CD8-positive, alpha-beta T cell (primary cell): ENCODE measurements at regions of chr11 and their contacts with region 1.

Region 1: GRCh38 chr11:65988791-65989592 is 13.0 kb downstream of the EIF1AD start:
- DNase-seq: peak; percentile 84 to 96 (median 91)
- ATAC-seq: peak; percentile 98
- H3K4me3 ChIP-seq: no peak overlapping the region
- H3K4me3 Mint-ChIP-seq: no peak overlapping the region
- H3K27ac ChIP-seq: peak overlapping the region in 1 of 2 experiments; percentile 20
- H3K27ac Mint-ChIP-seq: peak overlapping the region; percentile 6
- H3K4me1 ChIP-seq: no peaks in the 10 kb centered on the region
- H3K4me1 Mint-ChIP-seq: peaks cover 5% of the 10 kb centered on the region
- H3K27me3 ChIP-seq: no peaks in the 10 kb centered on the region
- H3K27me3 Mint-ChIP-seq: no peaks in the 10 kb centered on the region
- CTCF ChIP-seq: peak; percentile 98

Region 2: GRCh38 chr11:65625628-65626342 is 363.2 kb before region 1 on chr11:
- CTCF ChIA-PET with region 1: interaction called, 3 read pairs
- POLR2A ChIA-PET with region 1: no interaction called
- intact Hi-C with region 1: loop called in 1 of 2 experiments (anchors 5 kb)
- DNase-seq: peak in 8 of 9 experiments; percentile 24 to 83 (median 63)
- ATAC-seq: peak; percentile 88
- H3K4me3 ChIP-seq: no peak overlapping the region
- H3K4me3 Mint-ChIP-seq: no peak overlapping the region
- H3K27ac ChIP-seq: no peak overlapping the region
- H3K27ac Mint-ChIP-seq: peak overlapping the region; percentile 55
- H3K4me1 ChIP-seq: peaks cover 5% of the 10 kb centered on the region
- H3K4me1 Mint-ChIP-seq: peaks cover 9% of the 10 kb centered on the region
- H3K27me3 ChIP-seq: no peaks in the 10 kb centered on the region
- H3K27me3 Mint-ChIP-seq: no peaks in the 10 kb centered on the region
- CTCF ChIP-seq: peak; percentile 66

Region 3: GRCh38 chr11:65779851-65780577 is 209.0 kb before region 1 on chr11:
- CTCF ChIA-PET with region 1: interaction called, 21 read pairs
- POLR2A ChIA-PET with region 1: no interaction called
- intact Hi-C with region 1: loop called (anchors 1 kb)
- DNase-seq: peak; percentile 46 to 88 (median 76)
- ATAC-seq: peak; percentile 74
- H3K4me3 ChIP-seq: peak overlapping the region; percentile 85
- H3K4me3 Mint-ChIP-seq: peak overlapping the region; percentile 86
- H3K27ac ChIP-seq: peak overlapping the region; percentile 31 to 52
- H3K27ac Mint-ChIP-seq: peak overlapping the region; percentile 77
- H3K4me1 ChIP-seq: peaks cover 17% of the 10 kb centered on the region
- H3K4me1 Mint-ChIP-seq: peaks cover 8% of the 10 kb centered on the region
- H3K27me3 ChIP-seq: no peaks in the 10 kb centered on the region
- H3K27me3 Mint-ChIP-seq: peaks cover under 1% of the 10 kb centered on the region
- CTCF ChIP-seq: peak; percentile 97

Region 4: GRCh38 chr11:65802841-65803240 is 186.2 kb before region 1 on chr11:
- CTCF ChIA-PET with region 1: no interaction called
- POLR2A ChIA-PET with region 1: no interaction called
- intact Hi-C with region 1: no loop called
- DNase-seq: no peak
- ATAC-seq: no peak
- H3K4me3 ChIP-seq: no peak overlapping the region
- H3K4me3 Mint-ChIP-seq: no peak overlapping the region
- H3K27ac ChIP-seq: no peak overlapping the region
- H3K27ac Mint-ChIP-seq: no peak overlapping the region
- H3K4me1 ChIP-seq: no peaks in the 10 kb centered on the region
- H3K4me1 Mint-ChIP-seq: no peaks in the 10 kb centered on the region
- H3K27me3 ChIP-seq: peaks cover 2 to 4% of the 10 kb centered on the region in 2 experiments
- H3K27me3 Mint-ChIP-seq: peaks cover 25% of the 10 kb centered on the region
- CTCF ChIP-seq: no peak

Region 5: GRCh38 chr11:65817835-65818742 is 170.9 kb before region 1 on chr11:
- CTCF ChIA-PET with region 1: interaction called, 4 read pairs
- POLR2A ChIA-PET with region 1: no interaction called
- intact Hi-C with region 1: loop called (anchors 1 kb)
- DNase-seq: peak; percentile 89 to 99 (median 94)
- ATAC-seq: peak; percentile 93
- H3K4me3 ChIP-seq: peak overlapping the region; percentile 47 to 74
- H3K4me3 Mint-ChIP-seq: peak overlapping the region; percentile 80
- H3K27ac ChIP-seq: peak overlapping the region; percentile 62 to 65
- H3K27ac Mint-ChIP-seq: peak overlapping the region; percentile 67
- H3K4me1 ChIP-seq: peaks cover 12% of the 10 kb centered on the region
- H3K4me1 Mint-ChIP-seq: peaks cover 14% of the 10 kb centered on the region
- H3K27me3 ChIP-seq: no peaks in the 10 kb centered on the region
- H3K27me3 Mint-ChIP-seq: no peaks in the 10 kb centered on the region
- CTCF ChIP-seq: peak; percentile 100

Region 6: DNA sequence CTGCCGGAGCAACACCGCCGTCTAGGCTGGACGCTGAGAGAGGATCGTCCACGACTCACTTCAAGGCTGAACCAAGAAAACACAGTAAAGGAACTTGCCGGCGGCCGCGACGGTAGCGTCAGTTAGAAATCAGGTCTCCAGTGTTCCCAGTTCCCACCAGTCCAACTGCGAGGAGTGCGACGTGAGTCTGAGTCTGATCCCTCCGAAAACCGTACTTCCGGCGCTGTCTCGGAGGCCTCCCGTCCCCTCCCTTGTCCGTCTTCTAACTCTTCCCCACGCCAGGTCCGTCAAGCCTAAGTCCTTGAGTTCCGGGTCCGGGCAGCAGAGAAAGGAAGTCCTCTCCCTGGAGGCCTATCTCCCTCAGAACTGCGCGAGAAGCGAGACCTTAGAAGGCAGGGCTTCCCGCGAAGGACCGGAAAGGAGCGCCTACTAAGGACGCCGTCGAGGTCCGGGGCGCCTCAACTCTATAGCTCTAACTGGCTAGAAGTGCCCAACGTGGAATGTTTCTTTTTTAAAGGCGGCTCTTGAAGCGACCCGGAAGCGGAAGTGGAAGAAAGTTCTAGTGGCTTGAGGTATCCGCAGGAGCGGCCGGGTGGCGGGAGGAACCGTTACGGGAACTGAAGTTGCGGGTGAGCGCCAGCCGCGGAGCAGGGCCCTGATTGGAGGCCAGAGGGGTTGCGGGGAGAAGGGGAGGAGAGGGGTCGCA is 13.1 kb after region 1 on chr11 and contains the starts of genes BANF1 and EIF1AD:
- CTCF ChIA-PET with region 1: interaction called, 4 read pairs
- POLR2A ChIA-PET with region 1: interaction called, 5 read pairs
- intact Hi-C with region 1: loop called (anchors 1 kb)
- DNase-seq: peak; percentile 85 to 98 (median 92)
- ATAC-seq: peak; percentile 83
- H3K4me3 ChIP-seq: peak within 1 kb of the TSS; percentile 80 to 98
- H3K4me3 Mint-ChIP-seq: peak within 1 kb of the TSS; percentile 99
- H3K27ac ChIP-seq: peak within 1 kb of the TSS; percentile 93 to 95
- H3K27ac Mint-ChIP-seq: peak within 1 kb of the TSS; percentile 98
- H3K4me1 ChIP-seq: peaks cover 21% of the 10 kb centered on the region
- H3K4me1 Mint-ChIP-seq: peaks cover 43% of the 10 kb centered on the region
- H3K27me3 ChIP-seq: no peaks in the 10 kb centered on the region
- H3K27me3 Mint-ChIP-seq: no peaks in the 10 kb centered on the region
- CTCF ChIP-seq: no peak
- total RNA-seq, gene BANF1: 31.6 to 34.0 TPM
- total RNA-seq, gene EIF1AD: 119 to 126 TPM